Calu3 (cell line): ENCODE measurements at regions of chr11 and their contacts with region 1.

Region 1: GRCh38 chr11:113494021-113494420 is 18.8 kb upstream of the DRD2 start:
- DNase-seq: no peak
- H3K4me3 Mint-ChIP-seq: no peak overlapping the region
- H3K27ac Mint-ChIP-seq: no peak overlapping the region
- H3K4me1 Mint-ChIP-seq: no peaks in the 10 kb centered on the region
- H3K27me3 Mint-ChIP-seq: peaks cover 26% of the 10 kb centered on the region
- CTCF ChIP-seq: no peak

Region 2: DNA sequence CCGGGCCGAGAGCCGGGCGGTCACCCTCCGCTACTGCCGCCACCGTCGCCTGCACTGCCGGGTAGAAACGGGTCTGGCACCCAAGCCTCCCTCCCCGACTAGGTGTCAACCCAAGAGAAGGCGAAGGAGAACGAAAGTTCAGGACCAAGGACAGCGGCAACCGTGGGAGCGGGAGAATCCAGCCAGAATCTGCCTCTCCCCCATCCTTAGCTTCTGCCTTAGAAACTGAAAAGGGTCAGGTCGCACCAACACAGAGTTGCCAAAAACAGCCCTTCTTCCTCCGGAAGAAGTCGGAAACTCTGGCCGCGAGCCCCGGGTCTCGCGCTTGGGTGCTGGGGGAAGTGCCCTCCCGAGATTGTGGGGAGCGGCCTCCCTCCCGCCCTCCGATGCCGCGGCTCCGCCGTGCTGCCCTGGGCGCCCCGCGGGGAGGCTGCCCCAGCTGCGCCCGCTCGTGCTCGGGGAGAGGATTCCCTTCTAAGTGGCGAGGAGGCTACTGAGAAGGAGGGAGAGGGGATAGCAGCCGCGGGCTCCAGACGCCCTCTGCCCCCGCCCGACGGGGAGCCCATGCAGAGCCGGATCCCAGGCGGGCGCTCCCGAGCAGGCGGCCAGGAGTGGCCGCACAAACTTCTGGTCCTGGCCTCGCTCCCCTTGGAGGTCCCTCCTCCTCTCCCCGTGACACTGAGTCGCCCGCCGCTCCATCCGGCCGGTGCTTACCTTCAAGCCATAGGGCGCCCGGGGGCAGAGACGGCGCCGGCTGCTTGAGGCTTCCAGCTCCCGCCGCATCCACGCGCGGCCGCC is 19.5 kb before region 1 on chr11:
- CTCF ChIA-PET with region 1: no interaction called
- intact Hi-C with region 1: no loop called
- DNase-seq: peak; percentile 84
- H3K4me3 Mint-ChIP-seq: peak overlapping the region; percentile 34
- H3K27ac Mint-ChIP-seq: no peak overlapping the region
- H3K4me1 Mint-ChIP-seq: peaks cover 8% of the 10 kb centered on the region
- H3K27me3 Mint-ChIP-seq: peaks cover 85% of the 10 kb centered on the region
- CTCF ChIP-seq: no peak

Region 3: GRCh38 chr11:113528982-113529381 is 35.0 kb after region 1 on chr11:
- CTCF ChIA-PET with region 1: no interaction called
- intact Hi-C with region 1: no loop called
- DNase-seq: no peak
- H3K4me3 Mint-ChIP-seq: no peak overlapping the region
- H3K27ac Mint-ChIP-seq: no peak overlapping the region
- H3K4me1 Mint-ChIP-seq: no peaks in the 10 kb centered on the region
- H3K27me3 Mint-ChIP-seq: no peaks in the 10 kb centered on the region
- CTCF ChIP-seq: no peak

Region 4: GRCh38 chr11:113567867-113568544 is 74.0 kb after region 1 on chr11:
- CTCF ChIA-PET with region 1: interaction called, 13 read pairs
- intact Hi-C with region 1: no loop called
- DNase-seq: no peak
- H3K4me3 Mint-ChIP-seq: no peak overlapping the region
- H3K27ac Mint-ChIP-seq: no peak overlapping the region
- H3K4me1 Mint-ChIP-seq: peaks cover 8% of the 10 kb centered on the region
- H3K27me3 Mint-ChIP-seq: peaks cover 20% of the 10 kb centered on the region
- CTCF ChIP-seq: no peak